ENCODE measurements at regions of chr2 and their contacts with region 1.

Region 1: DNA sequence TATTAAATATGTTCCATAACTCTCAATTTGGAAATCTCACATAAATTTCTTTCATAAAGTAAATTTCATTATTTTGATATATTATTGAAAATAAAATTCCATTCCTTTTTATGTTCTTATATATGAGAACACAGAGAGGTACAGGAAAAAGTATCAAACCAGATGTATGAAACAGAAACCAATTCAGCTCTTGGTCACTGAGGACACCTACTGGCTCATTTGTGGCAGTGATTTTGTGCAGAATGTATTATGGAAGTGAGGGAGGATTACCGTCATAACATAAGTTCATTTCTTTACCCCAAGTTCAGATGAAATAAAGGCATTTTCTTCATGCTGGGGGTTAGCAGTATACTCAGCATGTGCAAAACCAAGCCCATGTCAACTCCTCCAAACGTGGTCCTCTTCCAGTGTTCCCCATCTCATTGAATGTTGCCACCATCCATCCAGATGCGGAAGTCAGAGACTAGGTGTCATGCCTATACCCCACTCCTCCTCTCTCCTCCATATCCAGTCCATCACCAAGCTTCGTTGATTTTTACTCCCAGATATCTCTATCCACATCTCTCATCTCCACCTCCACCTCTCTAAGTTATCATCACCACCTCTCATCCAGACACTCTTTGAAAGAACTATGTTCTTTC is 41.7 kb upstream of the MALL start:
- DNase-seq: peak; percentile 22
- H3K4me3 Mint-ChIP-seq: no peak overlapping the region
- H3K27ac Mint-ChIP-seq: no peak overlapping the region
- H3K4me1 Mint-ChIP-seq: peaks cover 8% of the 10 kb centered on the region
- H3K27me3 Mint-ChIP-seq: no peaks in the 10 kb centered on the region
- CTCF ChIP-seq: peak; percentile 65

Region 2: DNA sequence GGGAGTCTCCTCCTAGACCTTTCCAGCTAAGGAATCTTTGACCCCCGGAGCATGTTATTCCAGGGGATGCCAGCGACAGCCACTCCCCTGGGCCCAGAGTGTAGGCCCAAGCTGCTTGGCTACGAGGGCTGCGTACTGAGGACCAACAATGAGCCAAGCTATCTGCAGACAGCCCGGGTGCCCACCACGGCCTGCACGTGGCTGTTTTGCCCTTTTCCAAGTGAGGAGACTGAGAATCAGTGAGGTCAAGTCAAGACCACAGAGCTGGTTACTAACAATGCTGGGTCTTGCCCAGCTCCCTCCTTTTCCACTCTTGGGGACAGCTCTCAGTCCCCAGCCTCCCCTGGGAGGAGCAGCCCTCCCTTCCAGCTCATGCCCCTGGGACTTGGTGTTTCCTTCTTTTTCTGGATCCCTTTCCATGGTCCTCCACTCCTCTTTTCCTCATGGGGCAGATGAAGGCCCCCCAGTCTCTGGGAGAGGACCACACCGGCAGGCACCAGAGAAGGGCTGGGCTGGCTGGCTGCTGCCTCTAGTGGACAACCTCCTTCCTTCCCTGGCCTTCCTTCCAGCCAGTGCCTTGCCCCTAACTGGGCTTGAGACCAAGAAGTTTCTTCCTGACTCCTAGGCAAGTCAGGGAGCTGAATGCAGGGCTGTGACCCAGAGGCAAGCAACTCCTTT is 41.1 kb before region 1 on chr2:
- CTCF ChIA-PET with region 1: no interaction called
- intact Hi-C with region 1: loop called (anchors 2 kb)
- DNase-seq: peak; percentile 67
- H3K4me3 Mint-ChIP-seq: peak overlapping the region; percentile 84
- H3K27ac Mint-ChIP-seq: peak overlapping the region; percentile 87
- H3K4me1 Mint-ChIP-seq: peaks cover 42% of the 10 kb centered on the region
- H3K27me3 Mint-ChIP-seq: no peaks in the 10 kb centered on the region
- CTCF ChIP-seq: peak; percentile 61

Measured in Calu3 (cell line).